Prostate gland (tissue), 2 donors: ENCODE measurements at regions of chr3 and their contacts with region 1.

Region 1: GRCh38 chr3:99925584-99926212 is 108.0 kb downstream of the CMSS1 start:
- DNase-seq: peak; percentile 22
- H3K4me3 ChIP-seq: no peak overlapping the region
- H3K27ac ChIP-seq: no peak overlapping the region
- H3K4me1 ChIP-seq: no peaks in the 10 kb centered on the region
- H3K27me3 ChIP-seq: no peaks in the 10 kb centered on the region
- CTCF ChIP-seq: no peak
- POLR2A ChIP-seq: no peak

Region 2: GRCh38 chr3:99579246-99579645 is 346.5 kb before region 1 on chr3:
- intact Hi-C with region 1: no loop called
- DNase-seq: no peak
- H3K4me3 ChIP-seq: no peak overlapping the region
- H3K27ac ChIP-seq: no peak overlapping the region
- H3K4me1 ChIP-seq: no peaks in the 10 kb centered on the region
- H3K27me3 ChIP-seq: no peaks in the 10 kb centered on the region
- CTCF ChIP-seq: no peak
- POLR2A ChIP-seq: no peak

Region 3: GRCh38 chr3:99875929-99876841 is 49.5 kb before region 1 on chr3:
- intact Hi-C with region 1: loop called (anchors 5 kb)
- DNase-seq: peak; percentile 63
- H3K4me3 ChIP-seq: peak overlapping the region; percentile 40 to 45
- H3K27ac ChIP-seq: peak overlapping the region; percentile 73 to 83
- H3K4me1 ChIP-seq: no peaks in the 10 kb centered on the region
- H3K27me3 ChIP-seq: no peaks in the 10 kb centered on the region
- CTCF ChIP-seq: no peak
- POLR2A ChIP-seq: peak; percentile 83

Region 4: GRCh38 chr3:99965077-99965476 is 39.4 kb after region 1 on chr3:
- intact Hi-C with region 1: loop called (anchors 5 kb)
- DNase-seq: no peak
- H3K4me3 ChIP-seq: no peak overlapping the region
- H3K27ac ChIP-seq: no peak overlapping the region
- H3K4me1 ChIP-seq: no peaks in the 10 kb centered on the region
- H3K27me3 ChIP-seq: no peaks in the 10 kb centered on the region
- CTCF ChIP-seq: no peak
- POLR2A ChIP-seq: no peak